ENCODE measurements at regions of chr5 and their contacts with region 1.

Region 1: GRCh38 chr5:91101600-91102379 is 281.3 kb downstream of the ARRDC3 start:
- DNase-seq: no peak
- ATAC-seq: peak; percentile 94

Region 2: GRCh38 chr5:90932052-90932699 is 169.6 kb before region 1 on chr5:
- intact Hi-C with region 1: loop called (anchors 5 kb)
- DNase-seq: no peak
- ATAC-seq: peak; percentile 56

Region 3: DNA sequence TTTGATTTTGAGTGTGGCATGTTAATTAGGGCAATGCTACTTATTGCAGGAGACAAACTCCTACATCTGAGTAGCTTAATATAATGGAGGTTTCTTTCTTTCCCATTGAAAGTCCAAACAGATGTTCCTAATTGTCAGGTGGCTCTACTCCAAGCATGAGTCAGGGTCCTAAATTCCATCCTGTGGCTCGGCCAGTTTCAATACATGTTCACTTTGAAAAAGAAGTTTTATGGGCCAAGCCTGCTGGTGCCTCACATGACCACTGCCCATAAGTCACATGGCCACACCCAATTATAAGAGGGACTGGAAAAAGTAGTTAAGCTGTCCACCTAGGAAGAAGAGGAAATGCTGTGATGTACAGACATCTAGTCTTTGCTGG is 110.9 kb after region 1 on chr5:
- intact Hi-C with region 1: loop called (anchors 5 kb)
- DNase-seq: no peak
- ATAC-seq: peak; percentile 26

Region 4: GRCh38 chr5:91311697-91312501 is 210.1 kb after region 1 on chr5:
- intact Hi-C with region 1: loop called (anchors 5 kb)
- DNase-seq: peak; percentile 78
- ATAC-seq: peak; percentile 80